ENCODE measurements at regions of chr18 and their contacts with region 1.

Region 1: GRCh38 chr18:58671111-58671631 is at the start of gene MALT1:
- H3K4me3 ChIP-seq: peak within 1 kb of the TSS; percentile 71
- H3K27ac ChIP-seq: peak within 1 kb of the TSS; percentile 98
- H3K4me1 ChIP-seq: peaks cover 35% of the 10 kb centered on the region
- CTCF ChIP-seq: no peak

Region 2: GRCh38 chr18:58541789-58542425 is 129.3 kb before region 1 on chr18:
- CTCF ChIA-PET with region 1: interaction called, 4 read pairs
- POLR2A ChIA-PET with region 1: interaction called, 10 read pairs
- H3K4me3 ChIP-seq: no peak overlapping the region
- H3K27ac ChIP-seq: no peak overlapping the region
- H3K4me1 ChIP-seq: peaks cover 5% of the 10 kb centered on the region
- CTCF ChIP-seq: no peak

Region 3: GRCh38 chr18:58605027-58606020 is 65.8 kb before region 1 on chr18:
- CTCF ChIA-PET with region 1: interaction called, 3 read pairs
- POLR2A ChIA-PET with region 1: interaction called, 14 read pairs
- H3K4me3 ChIP-seq: no peak overlapping the region
- H3K27ac ChIP-seq: peak overlapping the region; percentile 2; the same call in 1 of the 2 replicates
- H3K4me1 ChIP-seq: peaks cover 30% of the 10 kb centered on the region
- CTCF ChIP-seq: no peak

Region 4: GRCh38 chr18:58682429-58683069 is 11.4 kb after region 1 on chr18:
- CTCF ChIA-PET with region 1: interaction called, 3 read pairs
- POLR2A ChIA-PET with region 1: interaction called, 36 read pairs
- H3K4me3 ChIP-seq: no peak overlapping the region
- H3K27ac ChIP-seq: no peak overlapping the region
- H3K4me1 ChIP-seq: peaks cover 20% of the 10 kb centered on the region
- CTCF ChIP-seq: no peak

Region 5: DNA sequence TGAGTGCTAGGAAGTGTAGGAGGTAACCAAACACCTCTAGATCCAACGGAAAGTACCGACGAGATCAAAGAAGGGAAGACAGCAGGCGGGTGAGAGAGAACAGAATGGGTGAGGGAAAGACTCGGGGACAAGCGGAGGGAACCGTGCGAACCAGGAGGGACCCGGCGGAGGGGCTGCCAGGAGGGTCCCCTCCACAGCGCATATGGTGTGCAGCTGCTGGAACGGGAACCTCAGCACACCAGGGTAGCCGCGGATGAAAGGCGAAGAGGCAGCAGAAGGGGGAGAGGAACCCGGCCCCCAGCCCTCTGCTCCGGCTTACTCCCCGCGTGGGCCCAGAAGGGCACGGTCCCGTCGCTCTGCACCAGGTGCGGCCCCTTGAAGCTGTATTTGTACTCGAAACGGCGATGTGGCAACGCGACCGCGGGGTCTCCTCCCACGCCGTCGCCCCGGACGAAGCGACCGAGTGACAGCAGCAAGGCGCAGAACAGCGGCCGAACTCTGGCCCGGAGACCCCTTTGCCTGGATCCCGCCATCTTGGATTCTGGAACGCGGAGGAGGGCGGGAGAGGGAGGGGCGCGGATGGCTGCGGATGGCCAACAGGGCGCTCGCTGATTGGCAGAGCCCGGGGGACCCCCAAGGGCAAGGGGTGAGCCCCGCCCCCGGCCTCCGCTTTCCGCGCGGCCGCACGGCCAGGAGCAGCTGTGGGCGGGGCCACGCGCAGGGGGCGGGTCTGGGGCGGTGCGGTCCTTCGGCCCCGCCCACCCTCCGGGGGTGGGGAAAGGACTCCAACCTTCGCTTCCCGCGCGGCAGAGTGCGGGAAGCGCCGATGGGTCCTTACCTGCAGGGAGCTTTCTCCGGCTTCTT is 687.8 kb after region 1 on chr18 and contains the start of gene LMAN1:
- CTCF ChIA-PET with region 1: no interaction called
- POLR2A ChIA-PET with region 1: interaction called, 10 read pairs
- H3K4me3 ChIP-seq: peak within 1 kb of the TSS; percentile 76
- H3K27ac ChIP-seq: peak within 1 kb of the TSS; percentile 90
- H3K4me1 ChIP-seq: peaks cover 6% of the 10 kb centered on the region
- CTCF ChIP-seq: no peak

Measured in HEK293 (cell line).